ENCODE measurements at regions of chr1 and their contacts with region 1.

Region 1: DNA sequence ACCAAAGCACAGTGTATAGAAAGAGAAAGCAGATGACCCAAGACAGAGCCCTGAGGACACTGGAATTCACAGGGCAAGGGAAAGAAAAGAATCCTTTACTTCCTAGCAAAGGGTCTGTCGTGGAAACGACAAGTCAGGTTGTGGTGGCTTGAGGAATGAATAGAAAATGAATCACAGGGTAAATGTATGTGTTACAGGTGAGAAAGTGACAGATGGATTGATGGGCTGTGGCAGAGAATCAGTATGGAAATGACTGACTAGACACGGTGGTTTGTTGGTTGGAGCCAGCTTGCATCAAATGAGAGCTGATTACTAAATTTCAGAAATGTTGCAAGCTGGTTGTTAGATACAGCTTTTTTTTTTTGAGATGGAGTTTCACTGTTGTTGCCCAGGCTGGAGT is 46.9 kb downstream of the PTP4A2 start:
- DNase-seq: no peak
- H3K4me3 ChIP-seq: no peak overlapping the region
- H3K4me3 Mint-ChIP-seq: no peak overlapping the region
- H3K27ac ChIP-seq: no peak overlapping the region
- H3K27ac Mint-ChIP-seq: peak overlapping the region in 3 of 7 donors; percentile 54 to 94 (median 88)
- H3K4me1 ChIP-seq: peaks cover 17% of the 10 kb centered on the region
- H3K4me1 Mint-ChIP-seq: peaks cover 13 to 27% (median 21%) of the 10 kb centered on the region in 4 donors
- H3K27me3 ChIP-seq: no peaks in the 10 kb centered on the region
- H3K27me3 Mint-ChIP-seq: no peaks in the 10 kb centered on the region

Region 2: GRCh38 chr1:31644560-31645273 is 246.6 kb before region 1 on chr1 and contains the start of gene PEF1:
- CTCF ChIA-PET with region 1: no interaction called
- POLR2A ChIA-PET with region 1: no interaction called
- intact Hi-C with region 1: no loop called
- DNase-seq: peak; percentile 99 to 100 (median 99)
- H3K4me3 ChIP-seq: peak within 1 kb of the TSS; percentile 72 to 74
- H3K4me3 Mint-ChIP-seq: peak within 1 kb of the TSS; percentile 97 to 100 (median 100)
- H3K27ac ChIP-seq: peak within 1 kb of the TSS; percentile 99
- H3K27ac Mint-ChIP-seq: peak within 1 kb of the TSS; percentile 98 to 100 (median 100)
- H3K4me1 ChIP-seq: peaks cover 41% of the 10 kb centered on the region
- H3K4me1 Mint-ChIP-seq: peaks cover 23 to 43% (median 32%) of the 10 kb centered on the region in 4 donors
- H3K27me3 ChIP-seq: no peaks in the 10 kb centered on the region
- H3K27me3 Mint-ChIP-seq: no peaks in the 10 kb centered on the region
- total RNA-seq, gene PEF1: 39.1 to 41.7 TPM

Region 3: GRCh38 chr1:31831397-31832378 is 59.6 kb before region 1 on chr1:
- CTCF ChIA-PET with region 1: no interaction called
- POLR2A ChIA-PET with region 1: interaction called, 18 read pairs
- intact Hi-C with region 1: loop called (anchors 1 kb)
- DNase-seq: no peak
- H3K4me3 ChIP-seq: no peak overlapping the region
- H3K4me3 Mint-ChIP-seq: no peak overlapping the region
- H3K27ac ChIP-seq: no peak overlapping the region
- H3K27ac Mint-ChIP-seq: peak overlapping the region in 2 of 7 donors; percentile 13 to 27
- H3K4me1 ChIP-seq: peaks cover 27% of the 10 kb centered on the region
- H3K4me1 Mint-ChIP-seq: peaks cover 24 to 36% (median 27%) of the 10 kb centered on the region in 4 donors
- H3K27me3 ChIP-seq: no peaks in the 10 kb centered on the region
- H3K27me3 Mint-ChIP-seq: no peaks in the 10 kb centered on the region

Region 4: GRCh38 chr1:31848381-31848897 is 42.8 kb before region 1 on chr1:
- CTCF ChIA-PET with region 1: no interaction called
- POLR2A ChIA-PET with region 1: interaction called, 10 read pairs
- intact Hi-C with region 1: no loop called
- DNase-seq: peak; percentile 47 to 66 (median 65)
- H3K4me3 ChIP-seq: peak overlapping the region; percentile 7 to 51
- H3K4me3 Mint-ChIP-seq: peak overlapping the region; percentile 61 to 88 (median 78)
- H3K27ac ChIP-seq: peak overlapping the region; percentile 16
- H3K27ac Mint-ChIP-seq: peak overlapping the region; percentile 65 to 96 (median 90)
- H3K4me1 ChIP-seq: peaks cover 48% of the 10 kb centered on the region
- H3K4me1 Mint-ChIP-seq: peaks cover 43 to 62% (median 51%) of the 10 kb centered on the region in 4 donors
- H3K27me3 ChIP-seq: no peaks in the 10 kb centered on the region
- H3K27me3 Mint-ChIP-seq: no peaks in the 10 kb centered on the region

Region 5: GRCh38 chr1:31904339-31905092 is 13.2 kb after region 1 on chr1:
- CTCF ChIA-PET with region 1: interaction called, 8 read pairs
- POLR2A ChIA-PET with region 1: interaction called, 19 read pairs
- intact Hi-C with region 1: no loop called
- DNase-seq: no peak
- H3K4me3 ChIP-seq: no peak overlapping the region
- H3K4me3 Mint-ChIP-seq: no peak overlapping the region
- H3K27ac ChIP-seq: no peak overlapping the region
- H3K27ac Mint-ChIP-seq: peak overlapping the region in 4 of 7 donors; percentile 18 to 68 (median 30)
- H3K4me1 ChIP-seq: no peaks in the 10 kb centered on the region
- H3K4me1 Mint-ChIP-seq: peaks cover 7 to 19% (median 14%) of the 10 kb centered on the region in 4 donors
- H3K27me3 ChIP-seq: no peaks in the 10 kb centered on the region
- H3K27me3 Mint-ChIP-seq: no peaks in the 10 kb centered on the region

Region 6: DNA sequence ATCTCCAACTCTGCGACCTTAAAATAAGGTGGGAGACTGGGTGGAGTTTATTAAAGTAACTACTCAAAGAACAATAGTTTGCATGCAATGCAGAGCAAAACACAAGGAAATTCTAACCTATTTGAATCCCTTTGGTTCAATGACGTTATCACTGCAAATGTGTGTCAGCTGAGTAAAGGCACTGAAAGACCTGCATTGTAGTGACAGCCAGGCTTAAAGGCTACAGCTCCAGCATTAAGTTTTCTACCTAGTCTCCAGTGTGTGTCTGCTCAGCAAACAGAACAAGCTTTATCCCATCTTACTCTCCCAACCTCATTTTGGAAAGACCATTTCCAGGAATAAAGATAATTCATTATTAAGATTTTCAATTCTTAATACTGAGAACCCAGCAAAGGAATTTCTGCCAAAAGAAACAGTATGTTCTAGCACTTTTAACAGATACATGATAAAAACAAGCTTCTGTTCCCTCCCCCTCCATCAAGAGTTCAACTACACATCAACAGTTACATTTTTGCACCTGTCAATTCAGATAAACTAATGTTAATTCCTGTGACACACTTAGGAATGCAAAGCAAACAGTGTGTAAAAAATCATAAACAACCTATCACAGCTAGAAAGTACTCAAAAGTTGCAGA is 32.7 kb after region 1 on chr1:
- CTCF ChIA-PET with region 1: interaction called, 6 read pairs
- POLR2A ChIA-PET with region 1: interaction called, 12 read pairs
- intact Hi-C with region 1: no loop called
- DNase-seq: no peak
- H3K4me3 ChIP-seq: no peak overlapping the region
- H3K4me3 Mint-ChIP-seq: peak overlapping the region; percentile 59 to 89 (median 80)
- H3K27ac ChIP-seq: peak overlapping the region; percentile 22
- H3K27ac Mint-ChIP-seq: peak overlapping the region; percentile 50 to 92 (median 81)
- H3K4me1 ChIP-seq: peaks cover 85% of the 10 kb centered on the region
- H3K4me1 Mint-ChIP-seq: peaks cover 53 to 88% (median 71%) of the 10 kb centered on the region in 4 donors
- H3K27me3 ChIP-seq: no peaks in the 10 kb centered on the region
- H3K27me3 Mint-ChIP-seq: no peaks in the 10 kb centered on the region

Measured in CD4-positive, alpha-beta memory T cell (primary cell).